Transverse colon (tissue), 4 donors: ENCODE measurements at regions of chr12 and their contacts with region 1.

Region 1: GRCh38 chr12:132429946-132430643 is 59.9 kb upstream of the FBRSL1 start:
- DNase-seq: peak; percentile 86
- H3K4me3 ChIP-seq: peak overlapping the region in 1 of 4 donors; percentile 4
- H3K27ac ChIP-seq: peak overlapping the region in 2 of 4 donors; percentile 26 to 38
- H3K4me1 ChIP-seq: peaks cover 0 to 25% (median 21%) of the 10 kb centered on the region in 4 donors
- H3K27me3 ChIP-seq: peaks cover 30% of the 10 kb centered on the region
- CTCF ChIP-seq: no peak
- EP300 ChIP-seq: no peak
- POLR2A ChIP-seq: no peak

Region 2: DNA sequence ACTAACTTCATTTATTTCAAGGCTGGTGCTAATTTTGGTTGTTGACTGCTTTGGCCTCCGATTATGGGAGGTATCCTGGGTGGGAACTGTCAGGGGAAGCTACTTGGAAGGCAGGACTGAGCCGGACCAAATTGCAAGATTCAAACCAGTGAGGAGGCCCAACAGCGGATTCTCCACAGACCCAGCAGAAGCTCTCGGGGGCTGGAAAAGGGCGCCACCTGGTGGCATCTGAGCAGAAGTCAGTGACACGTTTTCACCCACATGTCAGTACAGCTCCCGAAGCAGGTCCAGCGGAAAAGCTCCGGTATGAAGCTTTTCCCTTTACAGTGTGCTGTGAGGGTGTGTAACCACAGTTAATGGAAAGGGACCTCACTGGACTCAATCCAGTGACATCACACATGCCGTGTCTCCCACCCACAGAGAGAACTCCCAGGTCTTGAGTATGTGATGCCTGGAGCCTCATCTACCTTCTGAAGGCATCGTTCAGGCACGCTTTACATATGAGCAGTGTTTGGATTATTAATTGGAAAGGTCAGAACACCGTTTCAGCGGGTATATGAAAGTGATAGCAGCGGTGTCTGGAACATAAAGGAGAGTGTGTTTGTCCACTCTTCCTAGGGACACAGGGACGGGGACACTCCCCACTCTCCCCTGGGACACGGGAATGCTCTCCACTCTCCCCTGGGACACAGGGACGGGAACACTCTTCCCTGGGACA is 184.9 kb after region 1 on chr12:
- in situ Hi-C with region 1: loop called in 1 of 4 experiments (anchors 10 kb)
- intact Hi-C with region 1: no loop called
- DNase-seq: peak; percentile 84
- H3K4me3 ChIP-seq: no peak overlapping the region
- H3K27ac ChIP-seq: no peak overlapping the region
- H3K4me1 ChIP-seq: peaks cover 0 to 16% (median 5%) of the 10 kb centered on the region in 4 donors
- H3K27me3 ChIP-seq: peaks cover 71% of the 10 kb centered on the region
- CTCF ChIP-seq: peak; percentile 83 to 90 (median 89)
- EP300 ChIP-seq: no peak
- POLR2A ChIP-seq: no peak